Lower leg skin (tissue), 4 donors: ENCODE measurements at regions of chr5 and their contacts with region 1.

Region 1: GRCh38 chr5:115594128-115595047 is 7.9 kb downstream of the TICAM2 start:
- DNase-seq: no peak
- H3K4me3 ChIP-seq: no peak overlapping the region
- CTCF ChIP-seq: no peak
- POLR2A ChIP-seq: no peak

Region 2: DNA sequence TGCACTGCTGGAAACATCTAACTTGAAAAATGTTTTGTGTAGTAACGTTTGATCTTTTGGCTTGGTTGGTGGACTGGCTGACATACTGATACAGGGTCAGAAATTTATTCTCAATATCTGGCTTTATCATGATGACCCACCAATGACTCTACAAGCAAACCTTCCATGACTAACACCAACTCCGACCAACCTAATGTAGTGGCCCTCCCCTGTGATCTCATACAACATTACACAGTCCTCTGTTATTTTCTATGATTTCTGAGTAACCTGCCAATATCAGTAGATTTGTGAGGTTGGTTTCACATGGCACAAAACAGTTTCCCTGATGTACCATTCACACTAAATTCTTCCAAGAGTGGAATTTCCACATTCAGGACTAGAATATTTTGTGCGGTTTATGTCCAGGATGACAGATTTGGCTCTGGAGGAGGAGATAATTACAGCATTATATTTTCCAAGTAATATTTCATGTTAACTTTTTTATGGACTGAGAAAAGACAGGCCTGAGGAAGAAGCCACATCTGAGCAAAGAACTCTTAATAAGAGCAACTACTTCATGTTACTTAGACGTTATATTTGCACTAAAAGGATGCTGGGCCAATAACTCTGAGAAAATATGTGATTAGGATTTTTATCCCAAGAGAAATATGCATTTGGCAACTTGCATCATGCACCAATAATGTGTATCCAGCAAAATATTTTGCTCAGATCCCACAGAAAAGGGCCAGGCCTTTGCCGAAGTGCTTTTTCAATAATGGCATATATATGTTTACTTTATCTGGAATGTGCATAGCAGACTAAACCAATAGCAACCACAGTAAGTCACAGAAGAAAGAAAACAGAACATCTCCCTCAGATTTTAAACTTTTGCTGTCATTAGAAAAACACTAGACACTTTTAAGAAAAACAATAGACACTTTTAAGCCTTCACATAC is 959.2 kb before region 1 on chr5:
- intact Hi-C with region 1: loop called (anchors 5 kb)
- DNase-seq: no peak
- H3K4me3 ChIP-seq: no peak overlapping the region
- CTCF ChIP-seq: no peak
- POLR2A ChIP-seq: no peak